Right ventricle myocardium inferior (tissue), 1 donor: ENCODE measurements at regions of chr1 and their contacts with region 1.

Region 1: GRCh38 chr1:153572569-153573015 is 6.9 kb upstream of the S100A2 start:
- DNase-seq: peak; percentile 88
- ATAC-seq: peak; percentile 91

Region 2: GRCh38 chr1:153510984-153511410 is 61.6 kb before region 1 on chr1:
- intact Hi-C with region 1: loop called (anchors 1 kb)
- DNase-seq: peak; percentile 91
- ATAC-seq: peak; percentile 55

Region 3: GRCh38 chr1:153612755-153613331 is 40.3 kb after region 1 on chr1 and contains the start of gene S100A16:
- intact Hi-C with region 1: loop called (anchors 5 kb)
- DNase-seq: peak; percentile 81
- ATAC-seq: peak; percentile 91
- total RNA-seq, gene S100A16: 49.2 TPM

Region 4: DNA sequence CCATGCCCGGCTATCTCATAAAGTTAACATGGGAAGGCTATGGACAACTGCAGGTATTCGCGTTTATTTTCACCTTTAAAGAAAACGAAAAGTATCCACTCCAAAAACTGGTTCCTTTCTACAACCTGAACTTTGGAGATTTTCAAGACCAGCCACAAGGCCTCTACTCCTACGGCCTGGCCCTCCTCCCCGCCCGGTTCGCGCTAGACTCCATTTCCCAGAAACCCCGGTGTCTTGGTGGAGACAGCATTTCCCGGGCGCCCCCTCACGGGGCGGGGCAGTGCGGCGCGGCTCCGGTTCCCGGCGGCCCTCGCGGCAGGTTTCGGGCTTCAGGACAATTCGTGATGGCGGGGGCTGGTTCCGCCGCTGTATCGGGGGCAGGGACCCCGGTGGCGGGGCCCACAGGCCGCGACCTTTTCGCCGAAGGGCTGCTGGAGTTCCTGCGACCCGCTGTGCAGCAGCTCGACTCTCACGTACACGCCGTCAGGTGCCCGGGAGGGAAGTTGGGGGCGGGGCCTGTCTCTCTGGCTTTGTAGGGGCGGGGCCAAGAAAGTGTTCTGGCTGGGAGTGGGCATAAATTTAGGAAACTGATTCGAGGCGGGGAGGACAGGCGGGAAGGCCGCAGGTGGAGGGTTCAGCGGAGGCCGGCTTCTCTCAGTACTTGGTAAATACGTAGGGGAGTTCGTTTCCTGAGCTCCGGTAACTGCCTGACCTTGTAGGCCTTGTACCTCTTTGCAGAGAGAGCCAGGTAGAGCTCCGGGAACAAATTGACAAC is 86.0 kb after region 1 on chr1 and contains the start of gene SNAPIN:
- intact Hi-C with region 1: loop called (anchors 5 kb)
- DNase-seq: peak; percentile 95
- ATAC-seq: peak; percentile 99
- total RNA-seq, gene SNAPIN: 64.0 TPM

Region 5: GRCh38 chr1:153749408-153750005 is 176.9 kb after region 1 on chr1:
- intact Hi-C with region 1: loop called (anchors 10 kb)
- DNase-seq: peak; percentile 93
- ATAC-seq: peak; percentile 93